Right ventricle myocardium superior (tissue), 1 donor: ENCODE measurements at regions of chr2 and their contacts with region 1.

Region 1: GRCh38 chr2:201363857-201364560 is 6.9 kb upstream of the FLACC1 start:
- DNase-seq: no peak
- ATAC-seq: peak; percentile 74

Region 2: GRCh38 chr2:201257956-201258665 is 105.9 kb before region 1 on chr2:
- intact Hi-C with region 1: loop called (anchors 10 kb)
- DNase-seq: peak; percentile 75
- ATAC-seq: peak; percentile 75

Region 3: GRCh38 chr2:201285499-201285898 is 78.5 kb before region 1 on chr2:
- intact Hi-C with region 1: no loop called
- DNase-seq: no peak
- ATAC-seq: no peak